ENCODE measurements at regions of chr12 and their contacts with region 1.

Region 1: DNA sequence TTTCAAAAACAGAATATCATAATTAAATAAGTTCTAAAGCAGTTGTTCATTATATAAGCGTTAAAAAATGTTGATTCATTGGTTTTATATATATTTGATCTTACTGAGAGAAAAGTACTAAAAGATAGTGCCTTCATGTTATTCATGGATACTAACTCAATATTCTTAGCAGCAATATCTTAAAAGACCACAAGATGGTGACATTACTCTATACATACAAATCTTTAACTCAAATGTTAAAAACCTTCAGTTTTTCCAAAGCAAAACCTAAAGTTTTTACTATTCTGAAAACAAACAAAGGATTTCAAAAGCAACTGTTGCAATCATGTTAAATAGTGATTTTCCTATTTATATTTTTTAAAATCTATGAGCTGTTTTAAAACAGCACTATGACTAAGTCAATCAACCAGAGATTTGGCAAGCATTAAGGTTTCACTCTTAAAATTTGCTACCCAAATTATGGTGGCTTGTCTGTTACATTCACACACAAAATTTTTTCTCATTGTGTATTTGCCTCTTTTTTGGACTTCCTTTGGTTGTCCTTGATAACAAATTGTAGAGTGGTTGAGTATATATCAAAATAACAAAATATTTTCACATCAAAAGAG is 50.1 kb upstream of the RERGL start:
- DNase-seq: peak; percentile 50
- H3K4me3 ChIP-seq: no peak overlapping the region
- H3K27ac ChIP-seq: no peak overlapping the region
- H3K4me1 ChIP-seq: peaks cover 5% of the 10 kb centered on the region
- H3K27me3 ChIP-seq: no peaks in the 10 kb centered on the region
- CTCF ChIP-seq: peak; percentile 73

Region 2: GRCh38 chr12:17060260-17060659 is 1079.8 kb before region 1 on chr12:
- CTCF ChIA-PET with region 1: no interaction called
- POLR2A ChIA-PET with region 1: no interaction called
- intact Hi-C with region 1: no loop called
- DNase-seq: no peak
- H3K4me3 ChIP-seq: no peak overlapping the region
- H3K27ac ChIP-seq: no peak overlapping the region
- H3K4me1 ChIP-seq: peaks cover 6% of the 10 kb centered on the region
- H3K27me3 ChIP-seq: no peaks in the 10 kb centered on the region
- CTCF ChIP-seq: no peak

Region 3: GRCh38 chr12:18224745-18225144 is 84.7 kb after region 1 on chr12:
- CTCF ChIA-PET with region 1: no interaction called
- POLR2A ChIA-PET with region 1: no interaction called
- intact Hi-C with region 1: loop called (anchors 5 kb)
- DNase-seq: peak; percentile 63
- H3K4me3 ChIP-seq: no peak overlapping the region
- H3K27ac ChIP-seq: no peak overlapping the region
- H3K4me1 ChIP-seq: no peaks in the 10 kb centered on the region
- H3K27me3 ChIP-seq: no peaks in the 10 kb centered on the region
- CTCF ChIP-seq: peak; percentile 68

Region 4: GRCh38 chr12:18320036-18320617 is 180.0 kb after region 1 on chr12:
- CTCF ChIA-PET with region 1: no interaction called
- POLR2A ChIA-PET with region 1: no interaction called
- intact Hi-C with region 1: loop called (anchors 2 kb)
- DNase-seq: peak; percentile 78
- H3K4me3 ChIP-seq: no peak overlapping the region
- H3K27ac ChIP-seq: no peak overlapping the region
- H3K4me1 ChIP-seq: no peaks in the 10 kb centered on the region
- H3K27me3 ChIP-seq: no peaks in the 10 kb centered on the region
- CTCF ChIP-seq: peak; percentile 67